Heart left ventricle (tissue), 16 donors: ENCODE measurements at regions of chr21 and their contacts with region 1.

Region 1: GRCh38 chr21:28160378-28160777 is 832.3 kb downstream of the LTN1 start:
- DNase-seq: no peak
- ATAC-seq: no peak
- H3K4me3 ChIP-seq: no peak overlapping the region
- H3K27ac ChIP-seq: no peak overlapping the region
- H3K4me1 ChIP-seq: peaks cover 0 to 6% (median 0%) of the 10 kb centered on the region in 12 donors
- H3K27me3 ChIP-seq: no peaks in the 10 kb centered on the region
- CTCF ChIP-seq: no peak
- POLR2A ChIP-seq: no peak

Region 2: DNA sequence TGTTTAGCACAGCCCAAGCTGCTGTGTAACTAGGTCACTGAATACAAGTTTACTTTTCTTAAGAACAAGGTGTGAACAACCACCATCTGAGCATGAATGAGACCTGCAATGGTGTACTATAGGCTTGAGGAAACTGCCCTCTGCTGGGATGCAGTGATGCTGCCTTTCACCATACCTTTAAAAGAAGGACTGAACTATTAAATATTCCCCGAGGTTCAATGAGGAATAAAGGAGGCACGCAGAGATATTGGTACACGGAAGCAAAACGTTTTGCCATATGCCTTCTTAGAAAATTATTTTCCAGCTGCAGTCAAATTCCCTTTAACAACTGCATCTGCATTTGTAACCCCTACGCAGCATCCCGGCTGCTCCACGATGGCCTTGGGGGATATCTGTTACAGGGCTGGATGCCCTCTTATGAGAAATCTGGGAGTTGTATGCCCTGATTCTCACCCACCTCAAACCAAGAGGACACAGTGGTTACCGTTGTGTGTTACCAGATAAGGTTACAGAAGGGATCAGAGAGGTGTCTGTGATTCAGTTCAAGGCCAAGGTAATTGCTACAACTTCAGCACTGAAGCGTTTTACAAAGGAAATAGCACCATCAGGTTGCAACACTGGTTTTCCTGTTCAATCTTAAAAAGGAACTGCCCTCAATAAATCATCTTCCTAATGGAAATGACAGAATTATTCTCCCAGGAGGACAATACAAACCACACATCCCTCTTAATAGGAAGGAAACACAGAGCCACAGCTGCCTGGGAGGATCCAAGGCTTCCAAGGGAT is 361.8 kb after region 1 on chr21:
- intact Hi-C with region 1: loop called in 1 of 10 experiments (anchors 10 kb)
- DNase-seq: no peak
- ATAC-seq: peak; percentile 41 to 90 (median 72)
- H3K4me3 ChIP-seq: no peak overlapping the region
- H3K27ac ChIP-seq: peak overlapping the region; percentile 6 to 80 (median 56)
- H3K4me1 ChIP-seq: peaks cover 0 to 16% (median 11%) of the 10 kb centered on the region in 12 donors
- H3K27me3 ChIP-seq: no peaks in the 10 kb centered on the region
- CTCF ChIP-seq: peak in 9 of 12 donors; percentile 20 to 48 (median 31)
- POLR2A ChIP-seq: no peak

Region 3: DNA sequence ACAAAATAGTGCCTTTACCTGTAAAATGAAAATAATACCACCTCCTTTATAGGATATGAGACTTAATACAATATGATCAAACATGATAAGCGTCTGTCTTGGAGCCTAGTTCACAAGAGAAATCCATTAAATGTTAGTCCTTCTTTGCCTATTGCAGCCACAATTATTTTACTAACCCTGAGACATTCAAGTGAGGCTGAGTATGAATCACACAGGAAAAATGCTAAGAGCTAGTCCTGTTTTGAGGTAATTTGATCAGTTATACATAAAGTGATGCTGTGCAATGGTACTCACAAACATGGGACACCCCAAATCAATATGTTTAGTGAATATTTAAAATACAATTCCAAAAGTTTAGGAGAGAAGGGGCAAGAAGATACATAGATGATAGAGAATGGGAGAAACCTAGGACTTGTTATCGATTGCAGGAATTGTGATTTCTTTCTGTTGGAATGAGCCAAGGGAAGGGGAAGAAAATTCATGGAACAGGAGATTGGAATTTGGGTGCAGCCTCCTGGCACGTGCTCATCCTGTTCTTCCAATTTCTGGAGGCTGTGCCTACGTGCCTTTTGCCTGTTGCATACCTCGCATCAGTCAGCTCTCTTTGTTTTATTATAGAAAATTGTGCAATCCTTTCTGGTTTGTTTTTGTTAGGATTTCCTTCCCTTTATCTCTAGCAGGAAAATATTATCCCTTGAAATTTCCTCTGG is 1098.4 kb after region 1 on chr21:
- intact Hi-C with region 1: no loop called
- DNase-seq: no peak
- ATAC-seq: no peak
- H3K4me3 ChIP-seq: no peak overlapping the region
- H3K27ac ChIP-seq: no peak overlapping the region
- H3K4me1 ChIP-seq: peaks cover 0 to 33% (median 4%) of the 10 kb centered on the region in 12 donors
- H3K27me3 ChIP-seq: no peaks in the 10 kb centered on the region
- CTCF ChIP-seq: no peak
- POLR2A ChIP-seq: no peak